Activated B cell treated with CpG ODN at 0.5 μM for 24 hours (primary cell): ENCODE measurements at regions of chrX and their contacts with region 1.

Region 1: GRCh38 chrX:119606280-119607015 is at the start of gene NKRF:
- DNase-seq: peak; percentile 72
- ATAC-seq: peak; percentile 73
- H3K4me3 Mint-ChIP-seq: peak within 1 kb of the TSS; percentile 91
- H3K27ac Mint-ChIP-seq: peak within 1 kb of the TSS; percentile 94
- H3K4me1 Mint-ChIP-seq: peaks cover 43% of the 10 kb centered on the region
- H3K27me3 Mint-ChIP-seq: no peaks in the 10 kb centered on the region
- CTCF ChIP-seq: no peak
- total RNA-seq, gene NKRF: 21.5 and 22.6 TPM in 2 replicates

Region 2: DNA sequence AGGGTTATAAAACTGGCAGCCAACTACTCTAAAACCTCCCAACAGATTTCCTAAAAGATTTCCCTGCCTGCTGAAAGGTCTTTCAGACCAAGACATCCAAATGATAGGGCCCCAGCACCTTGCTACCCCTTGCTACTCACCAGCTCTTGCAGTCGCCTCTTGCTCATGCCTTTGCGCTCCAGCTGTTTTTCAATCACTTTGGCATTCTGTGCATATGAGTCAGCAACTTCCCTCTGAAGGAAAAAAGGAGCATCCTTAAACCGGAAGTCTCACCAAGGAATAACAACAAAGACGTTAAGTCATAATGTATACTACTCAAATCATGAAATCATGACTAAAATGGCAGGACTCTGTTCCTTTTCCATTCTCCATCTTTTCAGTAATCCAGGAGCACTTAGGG is 65.3 kb before region 1 on chrX:
- CTCF ChIA-PET with region 1: no interaction called
- POLR2A ChIA-PET with region 1: no interaction called
- intact Hi-C with region 1: no loop called
- DNase-seq: no peak
- ATAC-seq: no peak
- H3K4me3 Mint-ChIP-seq: no peak overlapping the region
- H3K27ac Mint-ChIP-seq: no peak overlapping the region
- H3K4me1 Mint-ChIP-seq: no peaks in the 10 kb centered on the region
- H3K27me3 Mint-ChIP-seq: no peaks in the 10 kb centered on the region
- CTCF ChIP-seq: no peak

Region 3: DNA sequence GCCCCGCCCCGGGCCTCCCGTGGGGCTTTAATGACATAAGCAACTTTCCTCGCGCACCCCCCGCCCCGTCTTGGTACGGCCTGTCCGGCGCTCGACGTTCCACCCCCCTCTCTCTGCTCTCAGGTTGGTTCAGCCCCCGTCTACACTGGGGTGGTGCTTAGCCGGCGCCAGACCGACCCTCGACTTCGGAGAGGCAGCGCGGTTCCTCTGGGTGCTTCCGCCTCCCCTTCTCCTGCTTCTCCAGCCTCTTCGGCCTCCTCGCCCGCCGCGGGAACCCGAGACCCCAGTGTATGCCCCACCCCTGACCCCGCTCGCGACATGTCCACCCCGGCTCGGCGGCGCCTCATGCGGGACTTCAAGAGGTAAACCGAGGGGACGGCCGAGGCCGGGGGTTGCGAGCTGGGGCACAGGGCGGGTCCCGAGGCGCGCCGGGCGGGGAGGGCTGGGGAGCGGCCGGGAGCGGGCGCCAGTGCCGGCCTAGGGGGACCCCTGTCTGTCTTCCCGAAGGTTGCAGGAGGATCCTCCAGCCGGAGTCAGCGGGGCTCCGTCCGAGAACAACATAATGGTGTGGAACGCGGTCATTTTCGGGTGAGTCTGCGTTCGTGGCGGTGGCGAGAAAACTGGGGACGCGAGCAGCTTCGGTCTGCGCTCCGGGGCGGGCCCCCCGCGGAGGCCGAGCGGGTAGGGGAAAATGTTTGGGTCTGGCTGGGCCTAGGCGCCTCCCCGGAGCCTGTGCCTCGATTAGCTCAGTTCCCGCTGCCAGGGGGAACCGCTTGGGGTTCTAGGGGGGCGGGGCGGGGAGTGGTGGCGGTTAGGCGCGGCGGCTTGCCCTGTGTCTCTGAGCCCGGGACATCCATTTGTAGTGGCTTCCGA is 31.8 kb before region 1 on chrX and contains the start of gene UBE2A:
- CTCF ChIA-PET with region 1: interaction called, 3 read pairs
- POLR2A ChIA-PET with region 1: interaction called, 48 read pairs
- intact Hi-C with region 1: loop called (anchors 1 kb)
- DNase-seq: peak; percentile 78
- ATAC-seq: peak; percentile 94
- H3K4me3 Mint-ChIP-seq: peak within 1 kb of the TSS; percentile 93
- H3K27ac Mint-ChIP-seq: peak within 1 kb of the TSS; percentile 91
- H3K4me1 Mint-ChIP-seq: peaks cover 38% of the 10 kb centered on the region
- H3K27me3 Mint-ChIP-seq: no peaks in the 10 kb centered on the region
- CTCF ChIP-seq: no peak
- total RNA-seq, gene UBE2A: 65.9 and 73.5 TPM in 2 replicates

Region 4: GRCh38 chrX:119647552-119648420 is 41.3 kb after region 1 on chrX:
- CTCF ChIA-PET with region 1: interaction called, 4 read pairs
- POLR2A ChIA-PET with region 1: interaction called, 9 read pairs
- intact Hi-C with region 1: loop called (anchors 5 kb)
- DNase-seq: no peak
- ATAC-seq: peak; percentile 89
- H3K4me3 Mint-ChIP-seq: peak overlapping the region; percentile 45
- H3K27ac Mint-ChIP-seq: peak overlapping the region; percentile 93
- H3K4me1 Mint-ChIP-seq: peaks cover 28% of the 10 kb centered on the region
- H3K27me3 Mint-ChIP-seq: no peaks in the 10 kb centered on the region
- CTCF ChIP-seq: no peak

Region 5: GRCh38 chrX:119729408-119730201 is 123.2 kb after region 1 on chrX:
- CTCF ChIA-PET with region 1: interaction called, 19 read pairs
- POLR2A ChIA-PET with region 1: interaction called, 18 read pairs
- intact Hi-C with region 1: loop called (anchors 2 kb)
- DNase-seq: peak; percentile 30
- ATAC-seq: peak; percentile 57
- H3K4me3 Mint-ChIP-seq: no peak overlapping the region
- H3K27ac Mint-ChIP-seq: no peak overlapping the region
- H3K4me1 Mint-ChIP-seq: peaks cover 2% of the 10 kb centered on the region
- H3K27me3 Mint-ChIP-seq: no peaks in the 10 kb centered on the region
- CTCF ChIP-seq: no peak

Region 6: GRCh38 chrX:119791438-119792231 is 185.2 kb after region 1 on chrX and contains the start of gene RPL39:
- CTCF ChIA-PET with region 1: no interaction called
- POLR2A ChIA-PET with region 1: interaction called, 38 read pairs
- intact Hi-C with region 1: no loop called
- DNase-seq: peak; percentile 69
- ATAC-seq: peak; percentile 90
- H3K4me3 Mint-ChIP-seq: peak within 1 kb of the TSS; percentile 95
- H3K27ac Mint-ChIP-seq: peak within 1 kb of the TSS; percentile 96
- H3K4me1 Mint-ChIP-seq: peaks cover 37% of the 10 kb centered on the region
- H3K27me3 Mint-ChIP-seq: no peaks in the 10 kb centered on the region
- CTCF ChIP-seq: no peak
- total RNA-seq, gene RPL39: 3,684 and 4,270 TPM in 2 replicates

Region 7: GRCh38 chrX:119887721-119888425 is 281.4 kb after region 1 on chrX:
- CTCF ChIA-PET with region 1: no interaction called
- POLR2A ChIA-PET with region 1: interaction called, 10 read pairs
- intact Hi-C with region 1: no loop called
- DNase-seq: peak; percentile 37
- ATAC-seq: peak; percentile 86
- H3K4me3 Mint-ChIP-seq: peak overlapping the region; percentile 44
- H3K27ac Mint-ChIP-seq: no peak overlapping the region
- H3K4me1 Mint-ChIP-seq: peaks cover 5% of the 10 kb centered on the region
- H3K27me3 Mint-ChIP-seq: no peaks in the 10 kb centered on the region
- CTCF ChIP-seq: no peak